Heart right ventricle (tissue), 16 donors: ENCODE measurements at regions of chr3 and their contacts with region 1.

Region 1: GRCh38 chr3:37347941-37348340 is 173.6 kb upstream of the LRRFIP2 start:
- DNase-seq: no peak
- ATAC-seq: no peak
- H3K4me3 ChIP-seq: no peak overlapping the region
- H3K27ac ChIP-seq: no peak overlapping the region
- H3K4me1 ChIP-seq: peaks cover 0 to 11% (median 0%) of the 10 kb centered on the region in 9 donors
- H3K27me3 ChIP-seq: no peaks in the 10 kb centered on the region
- CTCF ChIP-seq: no peak

Region 2: GRCh38 chr3:39086144-39086543 is 1738.2 kb after region 1 on chr3:
- intact Hi-C with region 1: loop called in 1 of 10 experiments (anchors 5 kb)
- DNase-seq: no peak
- ATAC-seq: no peak
- H3K4me3 ChIP-seq: no peak overlapping the region
- H3K27ac ChIP-seq: no peak overlapping the region
- H3K4me1 ChIP-seq: no peaks in the 10 kb centered on the region
- H3K27me3 ChIP-seq: no peaks in the 10 kb centered on the region
- CTCF ChIP-seq: no peak